CD4-positive, alpha-beta memory T cell (primary cell): ENCODE measurements at regions of chr16 and their contacts with region 1.

Region 1: DNA sequence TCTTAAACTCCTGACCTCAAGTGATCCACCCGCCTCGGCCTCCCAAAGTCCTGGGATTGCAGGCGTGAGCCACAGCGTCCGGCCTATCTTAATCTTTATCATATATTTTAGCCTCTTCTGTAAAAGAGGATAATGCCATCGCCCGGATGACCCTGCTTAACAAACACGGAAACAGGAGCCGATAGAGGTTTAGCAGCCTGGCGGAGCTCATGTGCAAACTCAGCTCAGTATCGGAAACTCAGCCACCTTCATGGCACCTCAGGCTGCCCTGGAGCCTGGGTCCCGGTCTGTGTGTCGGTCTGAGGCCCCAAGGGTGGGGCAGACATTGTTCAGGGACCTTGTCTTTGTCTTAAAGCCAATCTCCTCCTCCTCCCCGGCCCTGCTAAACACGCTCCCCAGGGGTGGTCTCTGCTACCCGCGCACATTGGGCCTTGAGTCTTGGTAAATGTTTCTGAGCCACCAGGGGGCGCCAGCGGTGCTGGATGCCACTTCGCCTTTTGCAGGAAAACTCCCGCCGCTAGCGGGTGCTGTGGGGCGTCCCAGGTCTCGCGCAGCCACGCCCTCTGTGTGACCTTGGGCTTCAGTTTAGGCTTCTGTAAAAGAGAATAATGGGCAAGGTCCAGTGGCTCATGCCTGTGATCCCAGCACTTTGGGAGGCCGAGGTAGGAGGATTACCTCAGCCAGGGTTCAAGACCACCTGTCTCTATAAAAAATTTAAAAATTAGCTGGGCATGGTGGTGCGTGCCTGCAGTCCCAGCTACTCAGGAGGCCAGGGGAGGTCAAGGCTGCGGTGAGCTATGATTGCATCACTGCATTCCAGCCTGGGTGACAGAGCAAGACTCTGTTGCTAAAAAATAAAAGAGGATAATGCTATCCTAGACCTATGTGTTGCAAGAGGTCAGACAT is 2.7 kb downstream of the CETP start:
- DNase-seq: peak; percentile 89 to 92 (median 92)
- H3K4me3 ChIP-seq: no peak overlapping the region
- H3K4me3 Mint-ChIP-seq: peak overlapping the region in 1 of 8 donors; percentile 69
- H3K27ac ChIP-seq: no peak overlapping the region
- H3K27ac Mint-ChIP-seq: peak overlapping the region in 3 of 7 donors; percentile 12 to 94 (median 83)
- H3K4me1 ChIP-seq: peaks cover 19% of the 10 kb centered on the region
- H3K4me1 Mint-ChIP-seq: peaks cover 11 to 22% (median 17%) of the 10 kb centered on the region in 4 donors
- H3K27me3 ChIP-seq: no peaks in the 10 kb centered on the region
- H3K27me3 Mint-ChIP-seq: no peaks in the 10 kb centered on the region

Region 2: GRCh38 chr16:56907401-56907800 is 57.1 kb before region 1 on chr16:
- CTCF ChIA-PET with region 1: no interaction called
- POLR2A ChIA-PET with region 1: no interaction called
- intact Hi-C with region 1: no loop called
- DNase-seq: no peak
- H3K4me3 ChIP-seq: no peak overlapping the region
- H3K4me3 Mint-ChIP-seq: no peak overlapping the region
- H3K27ac ChIP-seq: no peak overlapping the region
- H3K27ac Mint-ChIP-seq: no peak overlapping the region
- H3K4me1 ChIP-seq: peaks cover 10% of the 10 kb centered on the region
- H3K4me1 Mint-ChIP-seq: peaks cover 2 to 9% (median 4%) of the 10 kb centered on the region in 4 donors
- H3K27me3 ChIP-seq: no peaks in the 10 kb centered on the region
- H3K27me3 Mint-ChIP-seq: peaks cover 0 to 5% of the 10 kb centered on the region in 2 donors

Region 3: GRCh38 chr16:56919099-56919800 is 45.2 kb before region 1 on chr16:
- CTCF ChIA-PET with region 1: no interaction called
- POLR2A ChIA-PET with region 1: no interaction called
- intact Hi-C with region 1: no loop called
- DNase-seq: no peak
- H3K4me3 ChIP-seq: no peak overlapping the region
- H3K4me3 Mint-ChIP-seq: no peak overlapping the region
- H3K27ac ChIP-seq: no peak overlapping the region
- H3K27ac Mint-ChIP-seq: no peak overlapping the region
- H3K4me1 ChIP-seq: peaks cover 20% of the 10 kb centered on the region
- H3K4me1 Mint-ChIP-seq: peaks cover 15 to 26% (median 15%) of the 10 kb centered on the region in 4 donors
- H3K27me3 ChIP-seq: no peaks in the 10 kb centered on the region
- H3K27me3 Mint-ChIP-seq: peaks cover 0 to 3% of the 10 kb centered on the region in 2 donors

Region 4: GRCh38 chr16:56950881-56951771 is 13.4 kb before region 1 on chr16:
- CTCF ChIA-PET with region 1: interaction called, 40 read pairs
- POLR2A ChIA-PET with region 1: no interaction called
- intact Hi-C with region 1: no loop called
- DNase-seq: peak; percentile 39 to 57 (median 43)
- H3K4me3 ChIP-seq: no peak overlapping the region
- H3K4me3 Mint-ChIP-seq: no peak overlapping the region
- H3K27ac ChIP-seq: no peak overlapping the region
- H3K27ac Mint-ChIP-seq: peak overlapping the region; percentile 11 to 70 (median 25)
- H3K4me1 ChIP-seq: no peaks in the 10 kb centered on the region
- H3K4me1 Mint-ChIP-seq: peaks cover 5 to 13% (median 8%) of the 10 kb centered on the region in 4 donors
- H3K27me3 ChIP-seq: no peaks in the 10 kb centered on the region
- H3K27me3 Mint-ChIP-seq: no peaks in the 10 kb centered on the region

Region 5: GRCh38 chr16:57013229-57013628 is 48.7 kb after region 1 on chr16:
- CTCF ChIA-PET with region 1: interaction called, 37 read pairs
- POLR2A ChIA-PET with region 1: interaction called, 3 read pairs
- intact Hi-C with region 1: loop called (anchors 2 kb)
- DNase-seq: no peak
- H3K4me3 ChIP-seq: no peak overlapping the region
- H3K4me3 Mint-ChIP-seq: peak overlapping the region in 6 of 8 donors; percentile 63 to 89 (median 78)
- H3K27ac ChIP-seq: peak overlapping the region; percentile 79
- H3K27ac Mint-ChIP-seq: peak overlapping the region; percentile 83 to 98 (median 97)
- H3K4me1 ChIP-seq: peaks cover 98% of the 10 kb centered on the region
- H3K4me1 Mint-ChIP-seq: peaks cover 52 to 90% (median 69%) of the 10 kb centered on the region in 4 donors
- H3K27me3 ChIP-seq: no peaks in the 10 kb centered on the region
- H3K27me3 Mint-ChIP-seq: no peaks in the 10 kb centered on the region

Region 6: GRCh38 chr16:57029161-57030160 is 65.0 kb after region 1 on chr16:
- CTCF ChIA-PET with region 1: interaction called, 35 read pairs
- POLR2A ChIA-PET with region 1: interaction called, 3 read pairs
- intact Hi-C with region 1: no loop called
- DNase-seq: no peak
- H3K4me3 ChIP-seq: no peak overlapping the region
- H3K4me3 Mint-ChIP-seq: peak overlapping the region in 1 of 8 donors; percentile 4
- H3K27ac ChIP-seq: no peak overlapping the region
- H3K27ac Mint-ChIP-seq: peak overlapping the region; percentile 29 to 87 (median 78)
- H3K4me1 ChIP-seq: peaks cover 82% of the 10 kb centered on the region
- H3K4me1 Mint-ChIP-seq: peaks cover 31 to 91% (median 63%) of the 10 kb centered on the region in 4 donors
- H3K27me3 ChIP-seq: no peaks in the 10 kb centered on the region
- H3K27me3 Mint-ChIP-seq: no peaks in the 10 kb centered on the region

Region 7: DNA sequence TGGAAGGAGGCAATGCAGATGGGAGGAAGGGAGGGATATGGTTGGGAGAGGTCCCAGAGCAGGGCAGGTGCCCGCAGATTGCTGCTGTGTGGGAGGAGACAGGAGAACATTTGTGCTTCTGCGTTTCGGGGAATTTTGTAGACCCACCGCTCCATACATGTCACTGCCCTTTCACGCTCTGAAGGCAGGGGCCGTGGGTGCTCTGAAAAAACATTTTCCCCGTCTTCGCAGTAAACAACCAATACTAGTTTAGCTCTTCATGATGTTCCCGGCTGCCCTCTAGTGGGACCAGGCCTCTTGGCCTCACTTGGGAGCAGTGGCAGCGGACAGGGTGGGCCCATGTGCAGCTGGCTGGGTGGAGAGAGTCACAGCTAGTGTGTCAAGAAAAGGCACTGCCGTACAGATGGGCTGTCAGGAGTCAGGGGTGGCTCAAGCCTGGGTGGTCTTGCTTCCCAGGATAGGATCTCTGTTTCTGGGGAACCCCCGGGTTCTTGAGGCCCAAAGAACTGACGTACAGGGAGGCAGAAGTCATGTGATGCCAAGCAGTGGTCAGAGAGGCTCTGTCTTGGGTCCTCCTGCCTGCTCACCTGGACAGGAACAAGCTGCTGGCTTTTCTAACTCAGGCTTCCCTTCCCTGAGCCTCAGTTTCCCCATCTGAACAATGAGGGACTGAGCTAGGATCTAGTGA is 81.3 kb after region 1 on chr16:
- CTCF ChIA-PET with region 1: interaction called, 78 read pairs
- POLR2A ChIA-PET with region 1: interaction called, 41 read pairs
- intact Hi-C with region 1: loop called (anchors 1 kb)
- DNase-seq: no peak
- H3K4me3 ChIP-seq: no peak overlapping the region
- H3K4me3 Mint-ChIP-seq: peak overlapping the region in 1 of 8 donors; percentile 9
- H3K27ac ChIP-seq: peak overlapping the region; percentile 21
- H3K27ac Mint-ChIP-seq: peak overlapping the region; percentile 60 to 98 (median 77)
- H3K4me1 ChIP-seq: peaks cover 49% of the 10 kb centered on the region
- H3K4me1 Mint-ChIP-seq: peaks cover 28 to 47% (median 36%) of the 10 kb centered on the region in 4 donors
- H3K27me3 ChIP-seq: no peaks in the 10 kb centered on the region
- H3K27me3 Mint-ChIP-seq: no peaks in the 10 kb centered on the region

Region 8: GRCh38 chr16:57071831-57072582 is 107.5 kb after region 1 on chr16:
- CTCF ChIA-PET with region 1: interaction called, 27 read pairs
- POLR2A ChIA-PET with region 1: no interaction called
- intact Hi-C with region 1: no loop called
- DNase-seq: no peak
- H3K4me3 ChIP-seq: no peak overlapping the region
- H3K4me3 Mint-ChIP-seq: peak overlapping the region in 1 of 8 donors; percentile 41
- H3K27ac ChIP-seq: no peak overlapping the region
- H3K27ac Mint-ChIP-seq: peak overlapping the region; percentile 48 to 84 (median 62)
- H3K4me1 ChIP-seq: peaks cover 4% of the 10 kb centered on the region
- H3K4me1 Mint-ChIP-seq: peaks cover 4 to 7% (median 6%) of the 10 kb centered on the region in 4 donors
- H3K27me3 ChIP-seq: no peaks in the 10 kb centered on the region
- H3K27me3 Mint-ChIP-seq: no peaks in the 10 kb centered on the region

Region 9: DNA sequence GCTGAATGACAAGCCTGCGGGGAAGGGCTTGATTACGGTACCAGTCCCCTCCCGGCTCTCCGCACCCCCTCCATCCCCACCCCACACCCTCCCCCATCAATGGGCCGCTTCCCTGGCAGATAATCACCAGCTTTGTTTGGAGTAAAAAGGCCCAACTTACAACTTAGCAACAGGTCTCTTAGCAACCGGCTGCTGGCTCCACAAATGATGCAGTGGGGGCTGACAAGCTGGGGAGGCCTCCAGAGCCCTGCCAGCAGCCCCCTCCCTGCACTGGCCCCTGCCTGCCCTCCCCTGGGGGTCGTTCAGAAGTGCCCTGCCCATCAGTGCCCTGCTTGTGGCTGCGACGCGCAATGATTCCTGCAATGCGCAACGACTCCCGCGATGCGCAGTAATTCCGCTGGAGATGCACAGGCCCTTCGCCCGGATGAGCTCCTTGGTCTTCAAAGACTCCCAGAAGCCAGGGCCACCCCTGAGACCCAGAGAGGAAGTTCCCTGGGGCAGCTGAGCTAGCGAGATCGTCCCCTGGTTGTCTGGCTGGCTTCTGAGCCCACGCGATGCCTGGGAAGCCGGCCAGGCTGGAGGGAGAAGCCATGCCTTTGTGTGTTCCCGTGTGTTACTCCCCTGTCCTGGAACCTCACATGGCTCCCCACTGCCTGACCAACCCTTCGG is 151.2 kb after region 1 on chr16:
- CTCF ChIA-PET with region 1: no interaction called
- POLR2A ChIA-PET with region 1: no interaction called
- intact Hi-C with region 1: no loop called
- DNase-seq: no peak
- H3K4me3 ChIP-seq: no peak overlapping the region
- H3K4me3 Mint-ChIP-seq: no peak overlapping the region
- H3K27ac ChIP-seq: no peak overlapping the region
- H3K27ac Mint-ChIP-seq: no peak overlapping the region
- H3K4me1 ChIP-seq: no peaks in the 10 kb centered on the region
- H3K4me1 Mint-ChIP-seq: peaks cover 0 to 2% (median 0%) of the 10 kb centered on the region in 4 donors
- H3K27me3 ChIP-seq: no peaks in the 10 kb centered on the region
- H3K27me3 Mint-ChIP-seq: no peaks in the 10 kb centered on the region

Region 10: DNA sequence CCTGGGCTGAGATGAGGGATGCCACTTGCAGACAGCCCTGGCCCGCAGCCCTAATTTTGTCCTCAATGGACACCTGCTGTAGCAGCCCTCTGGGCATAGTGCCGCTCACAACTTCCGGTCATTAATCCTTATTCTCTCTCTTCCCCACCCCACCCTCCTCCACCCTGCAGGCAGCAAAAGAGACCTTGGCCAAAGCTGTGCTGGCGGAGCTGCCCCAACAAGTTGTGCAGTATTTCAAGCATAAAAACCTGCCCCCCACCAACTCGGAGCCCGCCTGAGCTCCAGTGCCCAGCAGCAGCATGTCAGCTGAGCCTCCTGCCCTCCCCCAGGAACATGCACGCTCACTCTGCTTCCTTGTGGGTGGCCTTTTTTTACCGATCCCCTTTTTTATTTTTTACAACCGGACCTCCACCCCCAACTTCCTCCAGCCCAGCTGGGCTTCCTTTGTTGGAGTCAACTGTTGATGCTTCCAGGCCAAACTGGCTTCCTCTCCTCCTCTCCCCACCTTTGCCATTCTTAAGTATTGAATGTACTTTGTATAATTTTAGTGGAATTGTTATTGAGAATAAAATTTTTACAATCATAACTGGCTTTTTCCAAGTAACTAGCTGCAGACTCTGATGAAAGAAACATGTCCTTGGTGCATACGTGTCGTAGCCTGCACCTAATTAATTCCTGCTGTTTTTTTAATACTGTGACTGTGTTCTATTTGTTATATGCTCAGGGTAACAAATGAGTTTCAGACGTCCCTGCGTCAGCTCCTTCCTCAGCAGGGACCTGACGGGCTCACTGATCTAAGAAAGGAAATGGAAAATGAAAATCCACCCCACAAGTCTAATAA is 183.1 kb after region 1 on chr16:
- CTCF ChIA-PET with region 1: no interaction called
- POLR2A ChIA-PET with region 1: no interaction called
- intact Hi-C with region 1: no loop called
- DNase-seq: no peak
- H3K4me3 ChIP-seq: no peak overlapping the region
- H3K4me3 Mint-ChIP-seq: no peak overlapping the region
- H3K27ac ChIP-seq: no peak overlapping the region
- H3K27ac Mint-ChIP-seq: peak overlapping the region in 1 of 7 donors; percentile 16
- H3K4me1 ChIP-seq: peaks cover 13% of the 10 kb centered on the region
- H3K4me1 Mint-ChIP-seq: peaks cover 7 to 30% (median 16%) of the 10 kb centered on the region in 4 donors
- H3K27me3 ChIP-seq: no peaks in the 10 kb centered on the region
- H3K27me3 Mint-ChIP-seq: no peaks in the 10 kb centered on the region

Region 11: DNA sequence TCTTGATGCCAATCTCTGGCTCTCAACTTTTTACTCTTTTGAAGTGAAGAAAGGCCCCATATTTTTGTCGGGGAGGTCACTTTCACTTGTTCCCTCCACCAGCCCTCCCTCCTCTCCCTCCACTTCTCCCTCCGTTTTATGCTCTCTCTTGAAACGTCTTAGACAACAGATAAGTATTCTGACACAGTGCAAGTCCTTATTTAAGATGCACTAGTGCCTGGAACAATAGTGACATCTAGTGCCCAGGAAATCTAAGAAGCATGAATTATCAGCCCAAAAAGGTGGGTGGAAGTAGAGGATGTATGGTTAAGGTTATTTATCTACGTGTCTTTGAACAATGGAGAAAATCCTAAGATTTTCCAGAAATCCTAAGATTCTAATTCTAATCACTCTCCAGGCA is 203.5 kb after region 1 on chr16:
- CTCF ChIA-PET with region 1: interaction called, 39 read pairs
- POLR2A ChIA-PET with region 1: no interaction called
- intact Hi-C with region 1: loop called (anchors 1 kb)
- DNase-seq: peak; percentile 52 to 72 (median 65)
- H3K4me3 ChIP-seq: no peak overlapping the region
- H3K4me3 Mint-ChIP-seq: no peak overlapping the region
- H3K27ac ChIP-seq: no peak overlapping the region
- H3K27ac Mint-ChIP-seq: peak overlapping the region in 2 of 7 donors; percentile 26 to 32
- H3K4me1 ChIP-seq: peaks cover 5% of the 10 kb centered on the region
- H3K4me1 Mint-ChIP-seq: peaks cover 9 to 16% (median 11%) of the 10 kb centered on the region in 4 donors
- H3K27me3 ChIP-seq: no peaks in the 10 kb centered on the region
- H3K27me3 Mint-ChIP-seq: no peaks in the 10 kb centered on the region